Ascending aorta (tissue), 2 donors: ENCODE measurements at regions of chr12 and their contacts with region 1.

Region 1: DNA sequence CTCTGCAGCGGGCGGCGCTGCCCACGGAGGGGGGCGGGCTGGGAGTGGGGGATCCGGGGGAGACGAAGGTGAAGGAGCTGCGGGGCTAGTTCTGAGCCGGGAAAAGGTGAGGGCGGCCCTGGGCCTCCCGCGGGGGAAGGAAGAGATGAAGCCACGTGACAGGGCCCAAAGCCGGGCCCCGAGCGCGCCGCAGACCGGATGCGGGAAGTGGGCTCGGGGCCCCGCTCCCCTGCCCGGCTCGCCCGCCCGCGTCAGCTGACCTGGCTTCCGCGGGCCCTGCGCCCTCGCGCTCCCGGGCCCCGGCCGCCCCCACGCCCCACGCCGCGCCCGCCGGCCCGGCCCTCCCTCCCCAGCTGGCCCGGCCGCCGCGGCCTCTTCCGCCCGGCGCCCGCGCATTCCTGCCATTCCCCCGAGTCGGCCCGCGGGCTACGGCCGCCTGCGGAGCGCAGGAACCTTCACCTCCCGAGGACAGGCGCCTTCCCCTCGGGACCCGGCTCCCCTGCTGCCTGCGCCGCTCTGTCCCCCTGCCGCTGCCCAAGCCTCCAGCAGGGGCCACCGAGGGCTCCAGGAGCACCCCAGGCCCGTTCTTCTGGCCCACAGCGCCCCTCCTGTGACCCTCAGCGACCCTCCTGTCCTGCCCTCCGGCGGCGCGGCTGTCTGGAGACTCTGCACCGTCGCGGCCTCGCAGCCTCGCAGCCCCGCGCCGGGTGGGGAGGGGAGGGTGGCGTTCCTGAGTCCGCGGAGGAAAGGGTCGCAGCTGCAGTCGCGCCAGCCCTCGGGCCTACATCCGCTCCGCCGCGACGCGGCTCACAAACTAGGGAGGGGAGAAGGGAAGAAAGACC is 20.4 kb downstream of the NINJ2 start:
- DNase-seq: peak in 1 of 2 donors; percentile 79
- H3K4me3 ChIP-seq: peak overlapping the region; percentile 72 to 81
- H3K27ac ChIP-seq: peak overlapping the region; percentile 97 to 99
- H3K4me1 ChIP-seq: peaks cover 18 to 36% of the 10 kb centered on the region in 2 donors
- H3K27me3 ChIP-seq: no peaks in the 10 kb centered on the region
- CTCF ChIP-seq: peak; percentile 37 to 48 (median 39)

Region 2: GRCh38 chr12:575948-576612 is 66.8 kb before region 1 on chr12:
- intact Hi-C with region 1: loop called (anchors 1 kb)
- DNase-seq: peak; percentile 42 to 88
- H3K4me3 ChIP-seq: peak overlapping the region in 1 of 2 donors; percentile 31
- H3K27ac ChIP-seq: peak overlapping the region; percentile 70 to 81
- H3K4me1 ChIP-seq: peaks cover 15 to 29% of the 10 kb centered on the region in 2 donors
- H3K27me3 ChIP-seq: no peaks in the 10 kb centered on the region
- CTCF ChIP-seq: peak; percentile 99 to 100 (median 100)

Region 3: DNA sequence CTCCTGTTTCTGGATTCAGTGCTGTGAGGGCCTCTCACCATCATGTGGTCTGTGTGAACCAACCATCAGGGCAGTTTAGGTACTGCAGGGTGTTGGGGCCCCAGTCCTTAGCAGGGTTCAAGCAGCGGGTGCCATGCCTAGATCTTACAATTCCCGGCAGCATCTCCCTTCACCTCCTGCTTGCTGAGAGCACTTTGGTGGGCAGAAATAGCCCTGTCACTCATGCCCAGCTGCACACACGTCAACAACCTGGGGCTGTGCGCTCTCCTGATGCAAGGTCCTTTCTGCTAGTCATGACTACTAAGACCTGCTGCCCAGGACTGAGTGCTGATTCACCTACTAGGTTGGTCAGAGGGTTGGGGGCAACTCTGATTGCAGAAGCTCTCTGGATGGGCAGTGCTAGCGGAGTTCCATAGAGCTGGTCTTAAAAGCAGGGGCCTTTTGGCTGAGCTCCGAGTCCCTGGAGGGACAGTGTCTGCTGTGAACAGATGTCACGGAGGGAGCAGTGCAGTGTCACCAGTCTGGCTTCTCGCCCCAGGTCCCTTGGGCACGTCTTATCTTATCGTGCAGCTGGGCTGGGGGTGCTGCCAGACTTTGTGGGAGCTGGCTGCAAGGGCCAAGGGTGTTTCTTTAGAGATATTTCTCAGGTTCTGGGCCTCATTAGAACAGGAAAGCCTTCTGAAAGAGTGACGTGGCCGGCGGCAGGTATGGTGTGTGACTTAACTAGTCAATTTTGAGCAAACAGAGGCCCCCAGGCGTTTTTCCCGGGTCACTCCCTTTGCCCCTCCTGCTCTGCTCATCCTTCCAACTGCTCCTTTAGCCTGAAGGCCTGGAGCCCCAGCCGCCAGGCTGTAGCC is 51.5 kb before region 1 on chr12:
- intact Hi-C with region 1: no loop called
- DNase-seq: peak in 1 of 2 donors; percentile 59
- H3K4me3 ChIP-seq: no peak overlapping the region
- H3K27ac ChIP-seq: peak overlapping the region in 1 of 2 donors; percentile 10
- H3K4me1 ChIP-seq: peaks cover 0 to 9% of the 10 kb centered on the region in 2 donors
- H3K27me3 ChIP-seq: no peaks in the 10 kb centered on the region
- CTCF ChIP-seq: no peak

Region 4: GRCh38 chr12:630656-631632 is 11.9 kb before region 1 on chr12:
- intact Hi-C with region 1: loop called (anchors 2 kb)
- DNase-seq: peak in 1 of 2 donors; percentile 83
- H3K4me3 ChIP-seq: peak overlapping the region; percentile 16 to 22
- H3K27ac ChIP-seq: peak overlapping the region; percentile 80 to 84
- H3K4me1 ChIP-seq: peaks cover 0 to 37% of the 10 kb centered on the region in 2 donors
- H3K27me3 ChIP-seq: no peaks in the 10 kb centered on the region
- CTCF ChIP-seq: no peak

Region 5: DNA sequence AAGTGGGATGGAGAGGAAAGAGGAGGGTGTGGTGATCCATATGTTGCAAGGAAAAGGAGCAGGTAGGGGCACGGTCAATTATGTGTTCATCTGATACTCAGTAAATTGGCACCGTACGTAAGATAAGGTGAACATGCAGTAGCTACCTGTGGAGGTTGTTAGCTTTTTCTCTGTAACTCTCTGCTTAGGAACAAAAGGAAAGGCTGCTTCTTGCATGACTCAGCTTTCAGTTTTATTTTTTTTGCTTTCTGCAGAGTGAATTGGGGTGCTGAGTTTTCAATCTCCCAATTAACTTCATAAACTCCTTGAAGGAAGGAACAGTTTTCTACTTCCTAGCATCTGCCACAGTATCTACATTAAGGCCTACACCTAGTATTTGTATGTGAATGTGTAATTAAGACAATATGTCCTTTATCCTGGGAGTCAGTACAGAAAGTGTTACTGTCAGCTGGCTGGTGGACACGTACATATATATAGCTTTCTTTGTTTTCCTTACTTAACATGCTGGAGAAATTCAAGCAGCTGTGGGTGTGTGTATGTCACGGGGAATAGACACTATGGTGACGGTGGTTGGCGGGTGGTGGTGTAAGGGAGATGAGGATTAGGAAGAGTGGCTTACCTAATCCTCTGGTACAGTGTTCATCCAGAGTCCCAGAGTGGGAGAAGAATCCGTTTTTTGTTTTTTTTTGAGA is 69.5 kb after region 1 on chr12:
- intact Hi-C with region 1: no loop called
- DNase-seq: no peak
- H3K4me3 ChIP-seq: no peak overlapping the region
- H3K27ac ChIP-seq: no peak overlapping the region
- H3K4me1 ChIP-seq: no peaks in the 10 kb centered on the region
- H3K27me3 ChIP-seq: no peaks in the 10 kb centered on the region
- CTCF ChIP-seq: no peak

Region 6: DNA sequence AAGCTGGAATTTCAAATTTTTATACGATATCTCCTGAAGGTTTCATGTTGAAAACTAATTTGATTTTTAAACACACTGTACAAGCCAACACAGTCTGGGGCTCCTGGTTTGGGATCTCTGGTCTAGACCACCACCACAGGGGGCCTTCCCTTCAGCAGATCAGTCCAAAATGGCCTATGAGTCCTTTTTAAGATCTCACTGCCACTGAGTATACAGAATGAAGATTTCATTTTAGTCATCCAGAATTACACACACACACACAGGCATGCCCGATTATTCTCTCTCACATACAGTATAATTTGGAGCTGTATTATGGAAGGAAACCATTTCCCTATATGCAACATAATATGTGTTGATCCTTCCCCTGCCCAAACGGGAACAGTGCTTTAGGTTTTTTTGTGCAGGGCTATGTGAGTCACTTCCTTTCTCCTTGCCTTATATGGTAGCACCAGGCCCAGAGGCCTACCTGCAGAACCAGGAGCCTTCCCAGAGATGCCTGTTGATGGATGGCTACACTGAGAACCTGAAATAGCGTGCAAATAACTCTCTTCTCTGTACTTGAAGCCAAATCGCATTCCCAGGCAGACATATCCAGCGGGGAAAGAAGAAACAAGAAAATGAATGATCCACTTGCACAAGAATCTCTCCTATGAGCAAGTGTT is 81.5 kb after region 1 on chr12:
- intact Hi-C with region 1: loop called (anchors 5 kb)
- DNase-seq: no peak
- H3K4me3 ChIP-seq: no peak overlapping the region
- H3K27ac ChIP-seq: no peak overlapping the region
- H3K4me1 ChIP-seq: no peaks in the 10 kb centered on the region
- H3K27me3 ChIP-seq: no peaks in the 10 kb centered on the region
- CTCF ChIP-seq: no peak